ENCODE measurements at regions of chr17 and their contacts with region 1.

Region 1: DNA sequence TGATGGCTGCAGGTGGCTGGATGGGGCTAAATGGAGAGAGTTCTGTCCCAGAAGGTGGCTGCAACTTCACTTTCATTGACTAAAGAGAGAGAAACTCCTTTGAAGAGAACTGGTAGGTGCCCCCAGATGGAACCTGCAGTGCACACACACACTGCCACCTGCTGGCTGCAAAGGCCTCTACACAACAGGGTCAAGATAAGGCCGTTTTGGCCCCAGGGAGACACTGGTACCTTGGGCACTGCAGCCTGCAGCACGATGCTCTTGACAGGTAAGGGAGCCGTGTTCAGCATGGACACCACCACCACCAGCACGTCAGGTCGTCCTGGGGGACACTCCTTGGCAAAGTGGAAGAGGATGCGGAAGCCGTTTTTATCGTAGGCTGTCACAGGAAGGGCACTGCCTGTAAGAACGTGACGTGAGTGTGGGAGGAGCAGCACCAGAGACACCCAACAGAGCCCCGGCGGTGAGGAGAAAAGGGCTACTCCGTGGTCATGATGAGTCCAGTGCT is 22.7 kb downstream of the GGA3 start:
- DNase-seq: peak; percentile 58 to 68 (median 67)
- H3K4me3 ChIP-seq: no peak overlapping the region
- H3K4me3 Mint-ChIP-seq: peak overlapping the region; percentile 82 to 94 (median 87)
- H3K27ac ChIP-seq: peak overlapping the region; percentile 16
- H3K27ac Mint-ChIP-seq: peak overlapping the region; percentile 90 to 99 (median 96)
- H3K4me1 ChIP-seq: peaks cover 45% of the 10 kb centered on the region
- H3K4me1 Mint-ChIP-seq: peaks cover 24 to 43% (median 31%) of the 10 kb centered on the region in 4 donors
- H3K27me3 ChIP-seq: no peaks in the 10 kb centered on the region
- H3K27me3 Mint-ChIP-seq: no peaks in the 10 kb centered on the region

Region 2: DNA sequence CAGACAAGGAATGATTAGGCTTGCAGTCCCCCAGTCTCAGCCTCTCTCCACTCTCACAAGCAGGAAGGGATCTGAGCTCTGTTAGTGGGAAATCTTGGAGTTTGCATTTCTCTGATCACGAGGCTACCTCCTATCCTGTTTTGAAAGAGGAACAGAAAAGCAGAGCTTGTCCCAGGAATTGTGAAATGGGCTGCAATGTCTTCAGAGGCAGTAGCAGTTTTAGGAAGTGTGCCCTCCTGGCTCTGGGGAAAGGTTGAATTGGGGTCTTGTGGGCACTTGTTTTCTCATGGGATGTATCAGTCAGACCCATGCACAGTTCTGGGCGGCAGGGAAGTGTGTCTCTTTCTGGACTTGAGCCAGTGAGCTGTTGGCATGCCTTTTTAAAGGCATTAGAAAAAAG is 10.4 kb before region 1 on chr17:
- CTCF ChIA-PET with region 1: interaction called, 21 read pairs
- POLR2A ChIA-PET with region 1: no interaction called
- intact Hi-C with region 1: no loop called
- DNase-seq: no peak
- H3K4me3 ChIP-seq: no peak overlapping the region
- H3K4me3 Mint-ChIP-seq: no peak overlapping the region
- H3K27ac ChIP-seq: no peak overlapping the region
- H3K27ac Mint-ChIP-seq: peak overlapping the region in 3 of 7 donors; percentile 10 to 62 (median 37)
- H3K4me1 ChIP-seq: no peaks in the 10 kb centered on the region
- H3K4me1 Mint-ChIP-seq: peaks cover 0 to 1% (median 0%) of the 10 kb centered on the region in 4 donors
- H3K27me3 ChIP-seq: no peaks in the 10 kb centered on the region
- H3K27me3 Mint-ChIP-seq: no peaks in the 10 kb centered on the region

Region 3: GRCh38 chr17:75250009-75250471 is 11.3 kb after region 1 on chr17:
- CTCF ChIA-PET with region 1: interaction called, 11 read pairs
- POLR2A ChIA-PET with region 1: interaction called, 9 read pairs
- intact Hi-C with region 1: no loop called
- DNase-seq: peak in 4 of 5 donors; percentile 43 to 91 (median 50)
- H3K4me3 ChIP-seq: peak overlapping the region in 1 of 2 donors; percentile 35
- H3K4me3 Mint-ChIP-seq: peak overlapping the region; percentile 78 to 90 (median 84)
- H3K27ac ChIP-seq: peak overlapping the region; percentile 51
- H3K27ac Mint-ChIP-seq: peak overlapping the region; percentile 90 to 99 (median 95)
- H3K4me1 ChIP-seq: peaks cover 40% of the 10 kb centered on the region
- H3K4me1 Mint-ChIP-seq: peaks cover 24 to 64% (median 48%) of the 10 kb centered on the region in 4 donors
- H3K27me3 ChIP-seq: no peaks in the 10 kb centered on the region
- H3K27me3 Mint-ChIP-seq: no peaks in the 10 kb centered on the region

Region 4: GRCh38 chr17:75261336-75262111 is 22.8 kb after region 1 on chr17 and contains the starts of genes GGA3 and MRPS7:
- CTCF ChIA-PET with region 1: interaction called, 8 read pairs
- POLR2A ChIA-PET with region 1: interaction called, 44 read pairs
- intact Hi-C with region 1: no loop called
- DNase-seq: peak; percentile 95 to 99 (median 97)
- H3K4me3 ChIP-seq: peak within 1 kb of the TSS; percentile 77 to 99
- H3K4me3 Mint-ChIP-seq: peak within 1 kb of the TSS; percentile 93 to 99 (median 97)
- H3K27ac ChIP-seq: peak within 1 kb of the TSS; percentile 96
- H3K27ac Mint-ChIP-seq: peak within 1 kb of the TSS; percentile 100
- H3K4me1 ChIP-seq: peaks cover 35% of the 10 kb centered on the region
- H3K4me1 Mint-ChIP-seq: peaks cover 32 to 65% (median 48%) of the 10 kb centered on the region in 4 donors
- H3K27me3 ChIP-seq: no peaks in the 10 kb centered on the region
- H3K27me3 Mint-ChIP-seq: no peaks in the 10 kb centered on the region
- total RNA-seq, gene GGA3: 121 to 122 TPM
- total RNA-seq, gene MRPS7: 34.1 to 36.3 TPM

Region 5: DNA sequence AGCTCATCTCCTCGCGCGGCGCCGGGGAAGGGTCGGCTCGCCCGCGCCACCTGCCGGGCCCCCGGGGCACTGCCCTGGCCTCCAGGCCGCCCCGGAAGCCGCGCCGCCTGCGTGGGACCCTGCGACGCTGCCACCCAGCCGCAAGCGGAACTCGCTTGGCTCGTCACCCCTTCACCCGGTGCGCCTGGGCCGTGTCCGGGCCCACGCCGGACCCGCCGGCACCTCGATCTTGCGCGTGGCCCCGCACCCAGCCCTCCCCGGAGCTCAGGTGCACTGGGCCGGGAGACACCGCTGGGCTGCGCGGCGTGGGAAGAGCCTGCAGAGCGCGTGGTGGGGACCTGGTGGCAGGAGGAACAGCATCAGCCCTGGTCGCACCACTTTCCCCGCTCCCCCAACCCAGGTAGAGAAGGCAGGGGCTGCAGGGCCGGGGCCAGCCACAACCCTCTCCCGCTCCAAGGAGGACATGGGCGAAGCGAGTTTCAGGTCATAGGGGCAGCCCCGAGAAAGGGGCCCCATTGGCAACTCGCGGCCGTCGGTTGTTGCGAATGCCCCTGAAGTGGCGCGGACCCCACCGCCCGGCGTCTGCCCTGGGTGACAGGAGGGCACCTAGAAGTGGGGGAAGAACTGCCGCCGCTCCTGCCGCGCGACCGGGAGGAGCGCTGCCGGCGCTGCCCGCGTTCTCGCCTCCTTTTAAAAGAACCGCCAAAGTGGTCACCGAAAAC is 32.7 kb after region 1 on chr17:
- CTCF ChIA-PET with region 1: interaction called, 4 read pairs
- POLR2A ChIA-PET with region 1: interaction called, 62 read pairs
- intact Hi-C with region 1: no loop called
- DNase-seq: peak; percentile 86 to 94 (median 88)
- H3K4me3 ChIP-seq: peak overlapping the region; percentile 42 to 82
- H3K4me3 Mint-ChIP-seq: peak overlapping the region; percentile 80 to 91 (median 84)
- H3K27ac ChIP-seq: peak overlapping the region; percentile 89
- H3K27ac Mint-ChIP-seq: peak overlapping the region; percentile 25 to 94 (median 88)
- H3K4me1 ChIP-seq: peaks cover 27% of the 10 kb centered on the region
- H3K4me1 Mint-ChIP-seq: peaks cover 10 to 35% (median 22%) of the 10 kb centered on the region in 4 donors
- H3K27me3 ChIP-seq: no peaks in the 10 kb centered on the region
- H3K27me3 Mint-ChIP-seq: no peaks in the 10 kb centered on the region

Measured in CD4-positive, alpha-beta memory T cell (primary cell).